Naive thymus-derived CD4-positive, alpha-beta T cell (primary cell): ENCODE measurements at regions of chr14 and their contacts with region 1.

Region 1: GRCh38 chr14:56125772-56126636 is 7.8 kb downstream of the PELI2 start:
- DNase-seq: no peak
- ATAC-seq: no peak
- H3K4me3 ChIP-seq: no peak overlapping the region
- H3K4me3 Mint-ChIP-seq: no peak overlapping the region
- H3K27ac ChIP-seq: no peak overlapping the region
- H3K27ac Mint-ChIP-seq: no peak overlapping the region
- H3K4me1 ChIP-seq: peaks cover 0 to 4% of the 10 kb centered on the region in 2 donors
- H3K4me1 Mint-ChIP-seq: peaks cover 12 to 67% (median 46%) of the 10 kb centered on the region in 7 donors
- H3K27me3 ChIP-seq: peaks cover 0 to 4% of the 10 kb centered on the region in 2 donors
- H3K27me3 Mint-ChIP-seq: peaks cover 0 to 19% (median 0%) of the 10 kb centered on the region in 5 donors

Region 2: GRCh38 chr14:56145965-56146364 is 20.0 kb after region 1 on chr14:
- CTCF ChIA-PET with region 1: no interaction called
- POLR2A ChIA-PET with region 1: no interaction called
- intact Hi-C with region 1: loop called in 1 of 2 experiments (anchors 2 kb)
- DNase-seq: no peak
- ATAC-seq: peak; percentile 29
- H3K4me3 ChIP-seq: no peak overlapping the region
- H3K4me3 Mint-ChIP-seq: no peak overlapping the region
- H3K27ac ChIP-seq: no peak overlapping the region
- H3K27ac Mint-ChIP-seq: no peak overlapping the region
- H3K4me1 ChIP-seq: no peaks in the 10 kb centered on the region
- H3K4me1 Mint-ChIP-seq: peaks cover 19 to 63% (median 45%) of the 10 kb centered on the region in 7 donors
- H3K27me3 ChIP-seq: no peaks in the 10 kb centered on the region
- H3K27me3 Mint-ChIP-seq: no peaks in the 10 kb centered on the region